ENCODE measurements at regions of chr17 and their contacts with region 1.

Region 1: DNA sequence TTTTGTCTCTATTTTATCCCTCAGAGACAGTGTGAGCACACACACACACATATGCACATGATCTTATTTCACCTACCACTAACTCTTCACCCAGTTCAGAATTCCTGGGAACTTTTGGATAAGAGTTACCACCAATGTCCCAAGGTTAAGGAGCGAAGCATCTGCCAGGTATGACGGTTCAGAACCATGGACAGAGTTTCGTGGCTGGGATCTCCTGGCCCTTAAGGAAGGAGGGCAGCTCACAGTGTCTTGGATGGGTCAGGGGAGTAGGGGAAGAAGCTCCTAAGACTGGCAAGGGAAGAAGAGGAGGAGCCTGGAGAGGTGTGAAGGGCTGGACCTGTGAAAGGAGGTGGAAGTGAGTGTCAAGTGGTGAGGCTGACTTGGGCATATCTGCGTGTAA is 23.0 kb upstream of the TMEM132E start:
- DNase-seq: no peak
- ATAC-seq: no peak
- H3K4me3 ChIP-seq: no peak overlapping the region
- H3K27ac ChIP-seq: no peak overlapping the region
- H3K4me1 ChIP-seq: no peaks in the 10 kb centered on the region
- H3K27me3 ChIP-seq: peaks cover 0 to 50% (median 10%) of the 10 kb centered on the region in 9 donors
- CTCF ChIP-seq: no peak
- POLR2A ChIP-seq: no peak

Region 2: DNA sequence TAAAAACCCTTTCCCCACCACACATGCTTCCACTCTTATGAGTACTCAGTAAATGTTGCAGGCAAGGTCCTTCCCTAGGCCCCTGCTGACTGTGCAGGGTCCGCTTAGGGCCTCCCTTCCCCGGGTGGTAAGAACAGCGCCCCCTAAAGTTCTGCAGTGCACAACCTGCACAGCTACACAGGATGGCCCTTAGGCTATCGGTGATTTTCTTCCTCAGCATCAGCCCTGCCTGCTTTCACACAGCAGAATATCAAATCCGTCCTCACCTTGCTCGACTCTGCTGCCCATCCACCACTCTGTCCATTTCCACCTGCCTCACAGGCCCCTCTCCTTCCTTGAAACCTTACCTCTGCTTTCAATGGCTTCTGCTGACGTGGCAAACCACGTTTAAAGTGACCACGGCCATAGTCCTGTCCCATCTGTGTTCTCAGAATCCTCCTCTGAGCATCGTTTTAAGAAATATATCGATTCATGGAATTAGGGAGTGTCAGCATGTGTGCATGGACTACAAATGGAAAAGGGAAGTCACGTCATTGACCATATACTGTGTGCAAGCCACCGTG is 28.4 kb before region 1 on chr17:
- intact Hi-C with region 1: no loop called
- DNase-seq: no peak
- ATAC-seq: no peak
- H3K4me3 ChIP-seq: no peak overlapping the region
- H3K27ac ChIP-seq: no peak overlapping the region
- H3K4me1 ChIP-seq: peaks cover 0 to under 1% (median 0%) of the 10 kb centered on the region in 12 donors
- H3K27me3 ChIP-seq: peaks cover 0 to 66% (median 28%) of the 10 kb centered on the region in 9 donors
- CTCF ChIP-seq: no peak
- POLR2A ChIP-seq: no peak

Region 3: DNA sequence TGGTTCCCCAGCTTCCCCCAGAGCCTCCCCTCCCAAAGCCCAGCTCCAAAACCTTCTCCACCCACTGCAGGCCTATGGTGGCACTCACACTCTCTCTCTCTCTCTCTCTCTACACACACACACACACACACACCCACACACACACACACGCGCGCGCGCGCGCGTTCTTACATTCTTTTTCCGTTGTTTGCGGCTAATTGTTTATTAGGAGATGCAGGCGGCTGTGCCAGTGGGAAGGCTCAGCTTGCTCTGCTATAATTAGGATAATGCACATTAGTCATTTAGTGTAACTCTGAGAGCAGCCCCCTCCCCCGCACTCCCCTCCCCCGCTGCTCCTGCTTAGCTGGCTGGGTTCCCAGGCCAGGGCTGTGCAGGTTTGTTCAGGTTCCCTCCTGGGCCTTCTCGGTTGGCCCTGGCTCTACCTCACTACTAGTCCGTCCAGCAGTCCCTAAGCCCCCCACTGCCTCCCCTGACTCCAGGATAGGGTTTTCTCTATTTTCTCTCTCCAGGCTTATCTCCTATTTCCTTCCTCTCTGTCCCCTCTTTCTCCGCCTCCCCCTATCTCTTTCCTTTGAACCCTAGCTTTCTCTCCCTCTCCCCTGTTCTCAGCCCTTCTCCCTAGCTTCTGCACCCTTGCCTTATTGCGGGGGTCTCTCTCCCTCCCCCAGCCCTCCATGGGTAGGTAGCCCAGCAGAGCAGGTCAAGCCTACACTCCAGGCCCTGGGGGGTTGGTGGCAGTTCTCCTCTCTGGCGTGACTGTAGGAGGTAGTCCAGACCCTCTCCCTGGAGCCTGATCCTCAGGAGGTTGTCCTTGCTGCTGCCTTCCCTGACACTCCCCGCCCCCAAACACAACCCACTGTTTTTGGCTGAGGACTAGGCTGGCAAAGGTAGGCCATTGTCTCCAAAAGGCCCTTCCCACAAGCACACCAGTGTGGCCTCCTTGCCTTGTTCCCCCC is 57.0 kb after region 1 on chr17:
- intact Hi-C with region 1: loop called in 1 of 10 experiments (anchors 10 kb)
- DNase-seq: no peak
- ATAC-seq: no peak
- H3K4me3 ChIP-seq: no peak overlapping the region
- H3K27ac ChIP-seq: no peak overlapping the region
- H3K4me1 ChIP-seq: no peaks in the 10 kb centered on the region
- H3K27me3 ChIP-seq: peaks cover 4 to 63% (median 28%) of the 10 kb centered on the region in 9 donors
- CTCF ChIP-seq: no peak
- POLR2A ChIP-seq: no peak

Measured in heart left ventricle (tissue), 16 donors.